Breast epithelium (tissue), 4 donors: ENCODE measurements at regions of chr11 and their contacts with region 1.

Region 1: GRCh38 chr11:111272420-111272819 is 25.9 kb upstream of the POU2AF3 start:
- DNase-seq: no peak
- H3K4me3 ChIP-seq: no peak overlapping the region
- H3K27ac ChIP-seq: no peak overlapping the region
- H3K4me1 ChIP-seq: no peaks in the 10 kb centered on the region
- H3K27me3 ChIP-seq: no peaks in the 10 kb centered on the region
- CTCF ChIP-seq: no peak
- POLR2A ChIP-seq: no peak

Region 2: DNA sequence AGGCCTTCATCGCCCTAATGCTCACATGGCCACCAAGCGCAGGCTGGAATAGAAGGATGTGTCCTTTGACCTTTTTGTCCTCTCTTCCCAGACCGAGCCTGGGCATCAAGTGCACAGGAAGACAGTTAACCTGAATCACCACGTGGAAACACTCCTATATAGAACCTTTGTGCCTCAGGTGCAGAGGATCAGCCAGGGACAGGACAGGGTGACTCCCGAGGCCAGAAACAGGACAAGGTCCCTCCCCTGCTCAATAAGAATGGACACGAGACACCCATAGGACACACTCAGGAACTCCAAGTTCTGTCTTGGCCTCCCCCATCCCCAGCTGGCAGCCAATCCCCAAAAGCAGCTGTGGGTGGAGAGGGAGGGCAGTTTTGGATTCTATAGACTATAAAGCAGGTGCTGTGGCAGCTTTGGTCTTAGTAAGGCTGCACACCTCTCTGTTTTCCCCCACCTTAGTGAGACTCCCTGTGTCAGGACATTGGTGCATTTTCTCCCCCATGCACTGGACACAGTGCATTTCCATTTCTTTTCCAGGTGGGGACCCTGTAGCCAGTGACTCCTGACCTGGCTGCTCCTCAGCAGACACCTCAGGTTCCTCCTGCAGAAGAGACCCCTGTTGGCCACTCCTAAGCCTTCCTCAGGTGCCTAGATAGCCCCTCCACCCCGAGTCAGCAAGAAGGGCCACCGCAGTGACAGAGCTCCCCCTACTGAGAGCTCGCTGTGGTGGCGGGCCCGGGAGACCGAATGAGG is 150.3 kb after region 1 on chr11:
- intact Hi-C with region 1: loop called (anchors 10 kb)
- DNase-seq: no peak
- H3K4me3 ChIP-seq: no peak overlapping the region
- H3K27ac ChIP-seq: no peak overlapping the region
- H3K4me1 ChIP-seq: peaks cover 0 to 14% of the 10 kb centered on the region in 2 donors
- H3K27me3 ChIP-seq: no peaks in the 10 kb centered on the region
- CTCF ChIP-seq: peak in 2 of 3 donors; percentile 47 to 55
- POLR2A ChIP-seq: no peak